ENCODE measurements at regions of chr3 and their contacts with region 1.

Region 1: GRCh38 chr3:4772171-4772804 is 206.9 kb upstream of the BHLHE40 start:
- DNase-seq: peak; percentile 90 to 93
- ATAC-seq: peak; percentile 88
- H3K4me3 ChIP-seq: no peak overlapping the region
- H3K27ac ChIP-seq: peak overlapping the region; percentile 52 to 73
- H3K4me1 ChIP-seq: peaks cover 0 to 2% of the 10 kb centered on the region in 2 donors
- H3K27me3 ChIP-seq: no peaks in the 10 kb centered on the region

Region 2: DNA sequence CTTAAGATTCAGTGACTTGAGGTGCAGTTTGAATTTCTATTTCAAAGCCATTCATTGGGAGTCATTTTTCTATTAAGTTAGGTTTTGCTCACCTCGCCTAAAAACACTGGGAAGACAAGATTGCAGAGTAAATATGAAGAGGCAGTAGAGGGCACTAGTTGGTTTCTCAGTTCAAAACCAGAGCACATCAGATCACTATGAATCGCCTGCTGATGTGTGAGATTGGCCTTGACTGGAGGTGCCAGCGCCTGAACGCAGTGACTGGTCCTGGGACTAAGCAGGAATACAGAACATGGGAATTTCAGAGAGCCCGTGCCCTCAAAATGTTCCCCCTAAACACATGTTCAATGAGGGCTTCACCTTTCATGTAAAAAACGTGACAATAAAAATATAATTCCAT is 50.2 kb before region 1 on chr3:
- intact Hi-C with region 1: loop called in 1 of 2 experiments (anchors 5 kb)
- DNase-seq: peak in 1 of 2 donors; percentile 56
- ATAC-seq: peak; percentile 69
- H3K4me3 ChIP-seq: no peak overlapping the region
- H3K27ac ChIP-seq: peak overlapping the region in 1 of 2 donors; percentile 64
- H3K4me1 ChIP-seq: peaks cover 0 to 2% of the 10 kb centered on the region in 2 donors
- H3K27me3 ChIP-seq: no peaks in the 10 kb centered on the region

Region 3: DNA sequence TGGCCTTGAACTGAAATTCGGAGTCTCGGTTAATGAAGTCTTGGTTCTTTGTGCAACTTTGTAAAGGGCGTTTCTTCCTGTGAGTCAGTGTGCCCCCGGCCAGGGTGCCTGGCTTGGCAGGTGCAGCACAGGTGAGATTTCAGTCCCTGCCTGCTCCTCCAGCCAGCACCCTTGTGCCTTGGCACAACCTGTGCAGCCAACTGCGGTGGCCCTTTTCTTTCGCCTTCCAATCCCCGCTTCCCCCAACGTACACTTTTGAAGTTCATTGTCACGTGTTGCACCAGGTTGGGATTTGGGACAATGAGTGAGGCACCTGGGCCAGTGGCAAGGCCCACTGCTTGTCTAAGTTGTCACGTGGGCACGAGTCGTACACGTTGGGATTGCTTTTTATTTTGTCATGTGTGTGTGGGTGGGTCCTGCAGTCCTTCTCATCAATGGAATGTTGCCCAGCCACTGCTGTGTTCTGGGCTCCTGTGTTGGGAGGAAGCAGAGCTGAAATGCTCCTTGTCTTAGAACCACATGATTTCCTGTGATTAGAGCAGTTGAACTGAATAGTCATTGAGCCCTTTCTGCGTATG is 35.9 kb before region 1 on chr3:
- intact Hi-C with region 1: no loop called
- DNase-seq: no peak
- ATAC-seq: peak; percentile 36
- H3K4me3 ChIP-seq: no peak overlapping the region
- H3K27ac ChIP-seq: no peak overlapping the region
- H3K4me1 ChIP-seq: peaks cover 0 to 5% of the 10 kb centered on the region in 2 donors
- H3K27me3 ChIP-seq: no peaks in the 10 kb centered on the region

Region 4: DNA sequence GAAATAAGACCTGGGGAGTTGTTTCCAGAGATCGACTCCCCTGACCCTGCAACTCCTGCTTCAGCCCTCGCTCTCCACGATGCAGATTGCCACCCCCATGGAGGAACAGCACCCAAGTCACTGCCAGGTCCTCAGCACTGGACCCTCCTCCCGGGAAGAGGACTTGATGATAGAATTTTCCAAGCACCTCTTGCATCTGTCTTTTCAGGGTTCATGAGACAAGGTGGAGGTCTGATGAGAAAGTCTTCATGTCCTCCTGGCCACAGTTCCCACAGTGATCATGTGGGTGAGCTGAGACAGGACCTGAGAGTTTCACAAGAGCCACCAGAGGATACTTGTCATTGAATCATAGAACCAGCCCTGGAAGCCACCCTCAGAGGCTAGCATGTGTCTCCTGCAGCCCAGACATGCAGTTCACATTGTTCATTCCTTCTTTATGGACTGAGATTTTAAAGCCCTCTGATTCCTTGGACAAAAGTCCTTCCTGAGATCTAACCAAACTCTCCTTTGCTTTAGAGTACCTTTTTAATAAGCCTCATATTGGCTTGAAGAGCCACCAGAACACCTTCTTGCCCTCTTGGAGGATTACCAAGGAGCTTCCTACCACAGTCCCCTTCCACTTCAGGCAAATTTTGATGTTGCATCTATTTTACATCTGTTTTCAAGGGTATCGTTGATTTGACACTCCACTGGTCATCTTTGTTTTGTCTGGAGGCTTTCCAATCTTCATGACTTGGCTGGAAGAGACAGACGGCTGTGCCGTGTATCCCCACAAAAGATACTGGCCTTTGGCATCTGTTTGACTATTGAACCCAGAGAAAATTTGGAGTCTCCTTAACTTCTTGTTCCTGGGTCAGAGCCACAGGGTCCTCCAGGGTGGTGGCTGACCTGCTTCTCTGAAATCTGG is 17.9 kb before region 1 on chr3:
- intact Hi-C with region 1: loop called in 1 of 2 experiments (anchors 1 kb)
- DNase-seq: no peak
- ATAC-seq: no peak
- H3K4me3 ChIP-seq: no peak overlapping the region
- H3K27ac ChIP-seq: no peak overlapping the region
- H3K4me1 ChIP-seq: peaks cover 5 to 9% of the 10 kb centered on the region in 2 donors
- H3K27me3 ChIP-seq: no peaks in the 10 kb centered on the region

Region 5: GRCh38 chr3:4807381-4808280 is 35.3 kb after region 1 on chr3:
- intact Hi-C with region 1: loop called in 1 of 2 experiments (anchors 5 kb)
- DNase-seq: no peak
- ATAC-seq: peak; percentile 35
- H3K4me3 ChIP-seq: no peak overlapping the region
- H3K27ac ChIP-seq: peak overlapping the region; percentile 24 to 83
- H3K4me1 ChIP-seq: peaks cover 2 to 6% of the 10 kb centered on the region in 2 donors
- H3K27me3 ChIP-seq: no peaks in the 10 kb centered on the region

Region 6: DNA sequence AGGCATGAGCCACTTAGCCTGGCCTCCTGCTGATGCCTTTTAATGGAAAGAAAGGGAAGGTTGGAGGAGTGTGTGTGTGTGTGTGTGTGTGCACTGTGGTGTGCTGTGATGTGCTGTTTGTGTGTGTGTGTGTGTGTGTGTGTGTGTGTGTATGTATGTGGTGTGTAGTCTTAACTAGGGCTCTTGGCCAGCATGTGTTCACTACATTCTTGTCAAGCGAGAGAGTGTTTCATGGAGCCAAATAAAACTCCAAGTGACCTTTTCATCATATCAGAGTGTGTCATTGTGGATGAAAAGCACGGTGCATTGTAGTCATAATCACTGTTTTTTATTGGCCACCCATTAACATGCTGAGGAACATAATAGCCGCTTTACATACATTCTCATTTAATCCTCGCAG is 176.1 kb after region 1 on chr3:
- intact Hi-C with region 1: no loop called
- DNase-seq: no peak
- ATAC-seq: no peak
- H3K4me3 ChIP-seq: no peak overlapping the region
- H3K27ac ChIP-seq: no peak overlapping the region
- H3K4me1 ChIP-seq: peaks cover 0 to 4% of the 10 kb centered on the region in 2 donors
- H3K27me3 ChIP-seq: no peaks in the 10 kb centered on the region